Activated B cell treated with CpG ODN at 0.5 μM for 24 hours (primary cell): ENCODE measurements at regions of chrX and their contacts with region 1.

Region 1: DNA sequence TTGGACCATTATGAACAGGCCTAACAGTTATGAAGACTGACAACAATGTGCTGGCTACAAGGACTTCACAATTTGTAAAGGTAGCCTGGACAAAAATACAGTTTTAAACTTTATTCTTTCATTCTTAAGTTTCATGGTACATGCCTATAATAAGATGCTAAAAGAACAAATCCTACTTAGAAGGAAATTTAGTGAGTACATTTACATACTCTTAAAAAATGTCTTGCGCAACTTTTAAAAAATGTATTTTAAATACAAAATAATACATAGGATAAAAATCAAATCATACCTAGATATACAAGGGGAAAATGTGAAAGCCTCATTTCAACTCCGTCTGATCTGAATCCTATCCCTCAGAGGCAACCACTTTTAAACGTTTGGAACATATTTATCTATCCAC is 200.7 kb upstream of the SPIN4 start:
- DNase-seq: no peak
- ATAC-seq: no peak
- H3K4me3 Mint-ChIP-seq: no peak overlapping the region
- H3K27ac Mint-ChIP-seq: no peak overlapping the region
- H3K4me1 Mint-ChIP-seq: no peaks in the 10 kb centered on the region
- H3K27me3 Mint-ChIP-seq: no peaks in the 10 kb centered on the region
- CTCF ChIP-seq: no peak

Region 2: DNA sequence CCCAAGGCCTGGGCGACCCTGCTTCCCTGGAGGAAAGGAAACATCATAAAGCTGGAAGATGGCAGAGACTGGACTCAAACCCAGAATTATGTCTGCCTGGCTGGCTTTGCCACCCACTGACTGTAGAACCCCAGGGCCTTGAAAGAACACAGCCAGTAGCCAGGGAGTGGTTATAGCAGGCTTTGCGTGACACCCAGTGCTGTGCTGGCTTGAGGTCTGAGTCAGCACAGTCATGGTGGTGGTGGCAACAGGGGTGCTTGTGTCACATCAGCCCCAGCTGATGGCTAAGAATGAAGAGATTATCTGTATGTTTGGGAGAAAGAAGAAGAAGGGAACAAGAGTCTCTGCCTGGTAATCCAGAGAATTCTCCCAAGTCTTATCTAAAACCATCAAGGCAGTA is 21.9 kb before region 1 on chrX:
- CTCF ChIA-PET with region 1: no interaction called
- POLR2A ChIA-PET with region 1: no interaction called
- intact Hi-C with region 1: loop called (anchors 1 kb)
- DNase-seq: no peak
- ATAC-seq: no peak
- H3K4me3 Mint-ChIP-seq: no peak overlapping the region
- H3K27ac Mint-ChIP-seq: no peak overlapping the region
- H3K4me1 Mint-ChIP-seq: no peaks in the 10 kb centered on the region
- H3K27me3 Mint-ChIP-seq: no peaks in the 10 kb centered on the region
- CTCF ChIP-seq: no peak

Region 3: DNA sequence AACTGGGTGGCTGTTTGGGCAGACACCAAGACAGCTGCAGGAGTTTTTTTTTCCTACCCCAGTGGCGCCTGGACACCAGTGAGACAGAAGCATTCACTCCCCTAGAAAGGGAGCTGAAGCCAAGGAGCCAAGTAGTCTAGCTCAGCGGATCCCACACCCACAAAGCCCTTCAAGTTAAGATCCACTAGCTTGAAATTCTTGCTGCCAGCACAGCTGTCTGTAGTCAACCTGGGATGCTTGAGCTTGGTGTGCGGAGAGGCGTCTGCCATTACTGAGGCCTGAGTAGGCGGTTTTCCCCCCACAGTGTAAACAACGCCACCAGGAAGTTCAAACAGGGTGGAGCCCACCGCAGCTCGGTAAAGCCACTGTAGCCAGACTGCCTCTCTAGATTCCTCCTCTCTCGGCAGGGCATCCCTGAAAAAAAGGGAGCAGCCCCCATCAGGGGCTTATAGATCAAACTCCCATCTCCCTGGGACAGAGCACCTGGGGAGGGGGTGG is 61.7 kb after region 1 on chrX:
- CTCF ChIA-PET with region 1: no interaction called
- POLR2A ChIA-PET with region 1: no interaction called
- intact Hi-C with region 1: no loop called
- DNase-seq: no peak
- ATAC-seq: no peak
- H3K4me3 Mint-ChIP-seq: no peak overlapping the region
- H3K27ac Mint-ChIP-seq: no peak overlapping the region
- H3K4me1 Mint-ChIP-seq: no peaks in the 10 kb centered on the region
- H3K27me3 Mint-ChIP-seq: no peaks in the 10 kb centered on the region
- CTCF ChIP-seq: no peak